ENCODE measurements at regions of chr2 and their contacts with region 1.

Region 1: GRCh38 chr2:191637182-191638078 is 40.5 kb upstream of the NABP1 start:
- DNase-seq: peak in 4 of 14 experiments; percentile 35 to 70 (median 68)
- ATAC-seq: peak; percentile 97
- H3K4me3 ChIP-seq: no peak overlapping the region
- H3K4me3 Mint-ChIP-seq: peak overlapping the region; percentile 8
- H3K27ac ChIP-seq: peak overlapping the region in 1 of 2 donors; percentile 42
- H3K27ac Mint-ChIP-seq: peak overlapping the region; percentile 81
- H3K4me1 ChIP-seq: peaks cover 23% of the 10 kb centered on the region
- H3K4me1 Mint-ChIP-seq: peaks cover 63% of the 10 kb centered on the region
- H3K27me3 ChIP-seq: no peaks in the 10 kb centered on the region
- H3K27me3 Mint-ChIP-seq: no peaks in the 10 kb centered on the region
- CTCF ChIP-seq: no peak

Region 2: GRCh38 chr2:190250421-190250820 is 1387.0 kb before region 1 on chr2:
- CTCF ChIA-PET with region 1: no interaction called
- POLR2A ChIA-PET with region 1: no interaction called
- intact Hi-C with region 1: no loop called
- DNase-seq: no peak
- ATAC-seq: no peak
- H3K4me3 ChIP-seq: no peak overlapping the region
- H3K4me3 Mint-ChIP-seq: no peak overlapping the region
- H3K27ac ChIP-seq: no peak overlapping the region
- H3K27ac Mint-ChIP-seq: no peak overlapping the region
- H3K4me1 ChIP-seq: no peaks in the 10 kb centered on the region
- H3K4me1 Mint-ChIP-seq: no peaks in the 10 kb centered on the region
- H3K27me3 ChIP-seq: no peaks in the 10 kb centered on the region
- H3K27me3 Mint-ChIP-seq: no peaks in the 10 kb centered on the region
- CTCF ChIP-seq: no peak

Region 3: GRCh38 chr2:191625016-191625415 is 12.4 kb before region 1 on chr2:
- CTCF ChIA-PET with region 1: interaction called, 5 read pairs
- POLR2A ChIA-PET with region 1: interaction called, 44 read pairs
- intact Hi-C with region 1: no loop called
- DNase-seq: peak in 13 of 14 experiments; percentile 19 to 91 (median 39)
- ATAC-seq: peak; percentile 86
- H3K4me3 ChIP-seq: no peak overlapping the region
- H3K4me3 Mint-ChIP-seq: no peak overlapping the region
- H3K27ac ChIP-seq: peak overlapping the region in 1 of 2 donors; percentile 52
- H3K27ac Mint-ChIP-seq: peak overlapping the region; percentile 73
- H3K4me1 ChIP-seq: peaks cover 34% of the 10 kb centered on the region
- H3K4me1 Mint-ChIP-seq: peaks cover 83% of the 10 kb centered on the region
- H3K27me3 ChIP-seq: no peaks in the 10 kb centered on the region
- H3K27me3 Mint-ChIP-seq: no peaks in the 10 kb centered on the region
- CTCF ChIP-seq: no peak

Region 4: DNA sequence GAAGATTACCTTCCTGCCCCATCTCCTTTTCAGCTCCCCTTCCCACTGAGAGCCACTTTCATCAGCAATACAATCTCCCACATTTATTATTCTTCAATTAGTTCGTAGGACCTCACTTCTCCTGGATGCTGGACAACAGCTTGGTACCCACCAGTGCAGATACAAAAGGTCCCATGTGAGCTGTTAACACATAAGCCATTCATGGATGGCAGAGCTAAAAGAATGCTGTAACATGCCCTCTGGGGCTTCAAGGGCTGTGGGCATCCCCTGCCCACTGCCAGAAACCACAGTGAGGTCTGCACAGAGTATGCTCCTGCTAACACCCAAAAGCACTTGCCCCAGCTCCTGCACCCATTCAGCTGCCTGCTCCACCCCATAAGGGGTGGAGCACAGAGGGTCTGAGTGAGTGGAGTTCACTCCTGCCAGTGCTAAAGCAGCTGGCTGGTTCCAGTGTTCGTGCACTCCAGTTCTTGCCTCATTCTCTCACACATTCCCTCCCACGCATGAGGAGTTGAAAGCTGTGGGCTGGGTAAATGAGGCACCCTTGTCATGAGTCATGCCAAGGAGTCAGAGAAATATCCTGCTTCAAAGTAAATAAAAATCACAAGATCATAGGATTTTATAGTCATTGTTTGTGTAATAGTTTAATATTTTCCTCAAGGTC is 863.3 kb after region 1 on chr2:
- CTCF ChIA-PET with region 1: no interaction called
- POLR2A ChIA-PET with region 1: no interaction called
- intact Hi-C with region 1: no loop called
- DNase-seq: no peak
- ATAC-seq: no peak
- H3K4me3 ChIP-seq: no peak overlapping the region
- H3K4me3 Mint-ChIP-seq: no peak overlapping the region
- H3K27ac ChIP-seq: no peak overlapping the region
- H3K27ac Mint-ChIP-seq: no peak overlapping the region
- H3K4me1 ChIP-seq: no peaks in the 10 kb centered on the region
- H3K4me1 Mint-ChIP-seq: no peaks in the 10 kb centered on the region
- H3K27me3 ChIP-seq: no peaks in the 10 kb centered on the region
- H3K27me3 Mint-ChIP-seq: no peaks in the 10 kb centered on the region
- CTCF ChIP-seq: no peak

Measured in CD4-positive, alpha-beta T cell (primary cell).